Activated CD4-positive, alpha-beta memory T cell treated with anti-CD3 and anti-CD28 coated beads for 36 hours (primary cell): ENCODE measurements at regions of chr22 and their contacts with region 1.

Region 1: DNA sequence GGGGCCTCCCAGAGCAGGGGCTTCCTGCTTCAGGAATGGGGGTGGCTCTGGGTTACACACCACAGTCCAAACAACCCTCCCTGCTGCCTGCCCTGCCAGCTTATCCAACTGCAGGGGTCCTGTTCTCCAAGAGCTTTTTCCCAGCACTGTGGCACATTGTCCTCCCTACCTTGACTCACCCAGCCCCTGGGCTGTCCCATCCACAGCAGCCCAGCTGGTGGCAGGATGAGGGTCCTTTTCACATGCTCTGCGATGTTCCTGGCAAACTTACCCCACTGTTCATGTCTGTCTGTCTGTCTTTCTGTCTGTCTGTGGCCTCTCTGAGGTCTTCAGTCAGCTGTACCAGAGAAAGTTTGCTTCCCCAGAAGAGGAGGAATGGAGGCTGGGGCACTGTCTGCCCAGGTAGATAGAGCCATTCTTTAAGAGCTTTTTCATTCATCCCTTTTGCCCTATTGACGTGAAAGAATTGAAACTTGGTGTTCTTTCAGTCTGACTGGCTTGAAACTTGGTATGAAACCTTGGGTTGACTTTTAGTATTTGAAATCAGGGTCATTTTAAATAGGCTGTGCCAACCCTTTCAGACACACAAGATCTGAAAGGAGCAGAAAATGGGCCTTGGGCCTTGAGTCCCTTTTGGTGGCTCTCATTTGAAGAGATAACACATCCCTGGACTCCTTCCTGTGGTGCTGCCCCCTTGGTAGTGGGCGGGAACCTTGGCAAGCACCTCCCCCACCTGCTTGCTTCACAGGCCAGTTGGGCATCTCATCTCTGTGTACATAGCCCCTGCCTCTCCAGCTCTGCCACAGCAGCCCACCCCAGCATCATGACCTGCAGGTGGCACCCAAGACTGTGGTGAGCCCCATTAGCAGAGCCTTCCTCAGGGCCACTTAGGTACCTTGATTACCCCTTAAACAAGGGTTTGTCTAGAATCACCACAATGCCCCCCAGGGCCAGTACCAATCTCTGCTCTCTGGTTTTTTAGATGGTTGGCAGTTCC is 74.6 kb upstream of the SUSD2 start:
- DNase-seq: peak; percentile 43
- H3K4me3 Mint-ChIP-seq: no peak overlapping the region
- H3K27ac Mint-ChIP-seq: peak overlapping the region; percentile 23
- H3K4me1 Mint-ChIP-seq: peaks cover 36% of the 10 kb centered on the region
- H3K27me3 Mint-ChIP-seq: no peaks in the 10 kb centered on the region

Region 2: DNA sequence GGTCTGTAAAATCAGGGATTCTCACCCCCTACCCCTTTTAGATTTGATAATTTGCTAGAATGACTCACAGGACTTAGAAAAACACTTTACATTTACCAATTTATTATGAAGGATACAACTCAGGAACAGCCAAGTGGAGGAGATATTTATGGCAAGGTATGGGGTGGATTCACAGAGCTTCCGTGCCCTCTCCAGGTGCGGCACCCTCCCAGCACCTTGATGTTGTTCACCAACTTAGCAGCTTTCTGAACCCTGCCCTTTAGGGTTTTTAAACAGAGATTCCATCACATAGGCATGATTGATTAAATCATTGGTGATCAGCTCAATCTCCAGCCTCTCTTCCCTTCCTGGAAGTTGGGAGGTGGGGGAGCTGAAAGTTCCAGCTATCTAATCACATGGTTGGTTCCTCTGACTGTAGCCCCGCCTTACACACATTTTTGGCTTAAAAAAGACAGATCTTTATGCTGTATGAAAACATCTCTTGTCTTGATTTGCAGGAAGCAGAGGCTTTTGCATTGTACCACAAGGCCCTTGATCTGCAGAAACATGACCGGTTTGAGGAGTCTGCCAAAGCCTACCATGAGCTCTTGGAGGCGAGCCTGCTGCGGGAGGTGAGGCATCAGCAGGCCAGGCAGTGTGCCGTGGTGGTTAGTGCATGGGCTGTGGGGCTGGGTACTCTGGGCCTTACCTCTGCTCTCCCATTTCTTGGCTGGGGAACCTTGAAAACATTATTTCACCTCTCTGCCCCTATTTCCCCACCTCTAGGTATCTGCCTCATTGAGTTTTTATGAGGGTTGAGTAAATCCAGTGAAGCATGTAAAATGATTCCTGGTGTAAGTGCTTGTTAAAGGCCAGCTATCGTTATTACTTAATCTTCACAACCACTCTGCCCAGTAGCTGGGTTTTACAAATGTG is 68.6 kb before region 1 on chr22:
- CTCF ChIA-PET with region 1: no interaction called
- POLR2A ChIA-PET with region 1: no interaction called
- intact Hi-C with region 1: no loop called
- DNase-seq: no peak
- H3K4me3 Mint-ChIP-seq: no peak overlapping the region
- H3K27ac Mint-ChIP-seq: peak overlapping the region; percentile 14
- H3K4me1 Mint-ChIP-seq: peaks cover 9% of the 10 kb centered on the region
- H3K27me3 Mint-ChIP-seq: no peaks in the 10 kb centered on the region

Region 3: DNA sequence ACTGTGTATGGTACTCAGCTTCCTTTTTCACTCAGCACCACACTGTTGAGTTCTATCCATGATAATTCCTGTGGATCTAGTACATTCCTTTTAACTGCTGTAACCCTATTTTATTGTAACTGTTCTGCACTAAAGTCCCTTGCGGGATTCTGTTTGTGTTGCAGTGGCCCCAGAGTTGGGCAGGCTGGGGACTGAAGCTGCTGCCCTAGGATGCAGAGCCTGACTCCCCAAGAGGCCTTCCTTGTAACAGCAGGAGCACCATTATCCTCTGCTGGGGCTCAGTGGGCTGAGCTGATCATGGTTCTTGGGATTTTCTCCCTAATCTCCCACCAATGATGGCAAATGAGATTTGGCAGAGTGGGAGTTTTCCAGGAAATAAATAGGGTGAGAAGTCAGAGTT is 17.9 kb before region 1 on chr22:
- CTCF ChIA-PET with region 1: no interaction called
- POLR2A ChIA-PET with region 1: no interaction called
- intact Hi-C with region 1: no loop called
- DNase-seq: no peak
- H3K4me3 Mint-ChIP-seq: no peak overlapping the region
- H3K27ac Mint-ChIP-seq: no peak overlapping the region
- H3K4me1 Mint-ChIP-seq: no peaks in the 10 kb centered on the region
- H3K27me3 Mint-ChIP-seq: no peaks in the 10 kb centered on the region

Region 4: GRCh38 chr22:24175160-24175808 is 68.6 kb after region 1 on chr22:
- CTCF ChIA-PET with region 1: interaction called, 15 read pairs
- POLR2A ChIA-PET with region 1: no interaction called
- intact Hi-C with region 1: no loop called
- DNase-seq: peak; percentile 76
- H3K4me3 Mint-ChIP-seq: no peak overlapping the region
- H3K27ac Mint-ChIP-seq: no peak overlapping the region
- H3K4me1 Mint-ChIP-seq: no peaks in the 10 kb centered on the region
- H3K27me3 Mint-ChIP-seq: no peaks in the 10 kb centered on the region